ENCODE measurements at regions of chr1 and their contacts with region 1.

Region 1: GRCh38 chr1:15100121-15100874 is 53.2 kb upstream of the TMEM51 start:
- DNase-seq: no peak
- H3K4me3 ChIP-seq: no peak overlapping the region
- CTCF ChIP-seq: peak; percentile 92

Region 2: GRCh38 chr1:14778898-14779865 is 321.1 kb before region 1 on chr1:
- CTCF ChIA-PET with region 1: interaction called, 10 read pairs
- POLR2A ChIA-PET with region 1: no interaction called
- DNase-seq: no peak
- H3K4me3 ChIP-seq: no peak overlapping the region
- CTCF ChIP-seq: peak; percentile 65

Region 3: DNA sequence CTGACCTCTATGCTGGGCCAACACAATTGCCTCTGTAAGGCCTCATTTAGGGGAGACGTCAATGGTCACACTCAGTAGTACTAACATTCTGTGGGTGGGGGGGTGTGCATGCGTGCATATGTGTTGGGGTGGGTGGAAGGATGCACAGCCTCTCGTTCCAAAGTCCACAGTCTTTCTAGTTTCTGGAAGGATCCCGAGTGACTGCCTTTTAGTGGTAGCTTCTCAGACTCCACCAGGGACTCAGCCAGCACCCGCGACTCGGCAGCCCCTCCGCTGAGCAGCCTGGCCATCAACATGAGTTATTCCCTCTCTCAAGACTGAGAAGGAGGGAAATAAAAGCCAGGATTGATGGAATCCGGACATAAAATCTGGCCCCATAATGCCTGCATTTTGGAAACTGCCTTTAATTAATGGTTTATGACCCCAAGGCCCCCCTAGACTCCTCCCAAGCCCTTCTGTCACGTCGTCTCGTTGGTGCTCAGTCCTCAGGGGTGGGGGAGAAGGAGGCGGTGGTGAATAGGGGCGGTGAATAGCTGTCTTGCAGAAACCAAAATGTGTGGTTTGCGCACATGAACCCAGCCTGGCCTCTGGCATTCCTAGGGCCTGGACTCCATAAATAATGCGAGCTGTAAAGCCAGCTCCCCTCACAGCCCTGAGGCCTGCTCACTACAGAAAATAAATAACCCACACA is 11.9 kb before region 1 on chr1:
- CTCF ChIA-PET with region 1: interaction called, 13 read pairs
- POLR2A ChIA-PET with region 1: no interaction called
- DNase-seq: no peak
- H3K4me3 ChIP-seq: no peak overlapping the region
- CTCF ChIP-seq: no peak

Region 4: DNA sequence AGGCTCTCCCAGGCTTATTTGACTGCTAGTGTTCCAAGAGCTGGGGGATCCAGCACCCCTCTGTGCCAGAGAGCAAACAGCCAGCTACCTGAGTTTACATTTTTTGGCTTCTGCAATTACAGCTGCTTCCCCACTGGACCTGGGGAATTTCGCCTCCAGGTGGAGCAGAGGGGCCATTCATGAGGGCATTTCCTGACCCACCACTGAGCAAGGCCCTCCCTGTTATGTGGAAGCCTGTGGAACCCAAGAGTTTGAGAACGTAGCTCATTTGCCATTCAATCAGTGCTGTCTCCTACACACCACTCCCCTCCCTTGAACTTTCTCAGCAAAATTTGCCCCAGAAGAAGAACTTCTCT is 10.6 kb after region 1 on chr1:
- CTCF ChIA-PET with region 1: interaction called, 16 read pairs
- POLR2A ChIA-PET with region 1: no interaction called
- DNase-seq: no peak
- H3K4me3 ChIP-seq: no peak overlapping the region
- CTCF ChIP-seq: no peak

Measured in AG04449 (cell line).